H1 (cell line): ENCODE measurements at regions of chr3 and their contacts with region 1.

Region 1: GRCh38 chr3:38270616-38271015 is 5.0 kb downstream of the SLC22A13 start:
- DNase-seq: no peak
- H3K4me3 ChIP-seq: no peak overlapping the region
- H3K27ac ChIP-seq: no peak overlapping the region
- H3K4me1 ChIP-seq: peaks cover 0 to 6% (median 2%) of the 10 kb centered on the region in 4 experiments; a peak in 2 of 7 replicates
- H3K27me3 ChIP-seq: no peaks in the 10 kb centered on the region
- CTCF ChIP-seq: no peak
- EP300 ChIP-seq: no peak
- POLR2A ChIP-seq: no peak
- RAD21 ChIP-seq: no peak

Region 2: DNA sequence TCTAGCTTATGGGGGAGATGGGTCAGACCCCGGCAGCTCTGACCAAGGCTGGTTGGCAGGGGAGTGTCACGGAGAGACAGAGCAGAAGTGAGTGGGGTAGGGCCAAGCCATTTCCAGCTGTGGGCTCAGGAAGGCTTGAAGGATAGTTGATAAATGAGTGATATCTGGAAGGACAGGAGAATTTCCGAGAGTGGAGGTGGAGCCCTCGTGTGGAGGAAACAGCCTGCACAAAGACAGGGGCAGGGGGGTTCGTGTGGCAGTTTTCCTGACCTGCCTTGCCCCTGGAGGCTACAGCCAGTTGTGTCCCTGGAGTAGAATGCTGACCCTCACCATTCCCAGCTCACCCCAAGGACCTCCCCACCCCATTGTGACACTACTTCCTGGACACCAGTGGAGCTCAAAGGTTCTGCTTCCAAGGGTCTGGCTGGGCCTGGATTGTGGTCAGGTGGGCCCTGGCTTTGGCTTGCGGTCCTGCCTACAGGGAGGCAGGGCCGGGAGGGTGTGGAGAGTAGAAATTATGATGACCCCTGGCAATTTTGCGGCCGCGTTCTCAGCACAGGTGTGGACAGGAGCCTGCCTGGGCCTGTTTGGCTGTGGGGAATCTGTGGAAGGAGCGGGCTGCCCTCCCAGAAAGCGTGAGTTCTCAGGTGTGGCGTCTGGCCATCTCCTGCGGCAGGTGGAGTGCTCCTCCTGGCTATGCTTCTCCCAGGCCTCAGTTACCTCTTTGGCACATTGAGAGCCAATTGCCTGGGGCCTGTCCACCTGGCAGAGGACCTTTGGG is 11.5 kb after region 1 on chr3 and contains the start of gene SLC22A14:
- CTCF ChIA-PET with region 1: interaction called, 22 read pairs
- POLR2A ChIA-PET with region 1: interaction called, 3 read pairs
- DNase-seq: peak; percentile 15 to 64
- H3K4me3 ChIP-seq: no peak within 1 kb of the TSS
- H3K27ac ChIP-seq: no peak within 1 kb of the TSS
- H3K4me1 ChIP-seq: no peaks in the 10 kb centered on the region
- H3K27me3 ChIP-seq: no peaks in the 10 kb centered on the region
- CTCF ChIP-seq: peak; percentile 65 to 67 (median 67)
- EP300 ChIP-seq: no peak
- POLR2A ChIP-seq: no peak
- RAD21 ChIP-seq: peak; percentile 58 to 70
- total RNA-seq, gene SLC22A14: not detected in 2 replicates